ENCODE measurements at regions of chr22 and their contacts with region 1.

Region 1: DNA sequence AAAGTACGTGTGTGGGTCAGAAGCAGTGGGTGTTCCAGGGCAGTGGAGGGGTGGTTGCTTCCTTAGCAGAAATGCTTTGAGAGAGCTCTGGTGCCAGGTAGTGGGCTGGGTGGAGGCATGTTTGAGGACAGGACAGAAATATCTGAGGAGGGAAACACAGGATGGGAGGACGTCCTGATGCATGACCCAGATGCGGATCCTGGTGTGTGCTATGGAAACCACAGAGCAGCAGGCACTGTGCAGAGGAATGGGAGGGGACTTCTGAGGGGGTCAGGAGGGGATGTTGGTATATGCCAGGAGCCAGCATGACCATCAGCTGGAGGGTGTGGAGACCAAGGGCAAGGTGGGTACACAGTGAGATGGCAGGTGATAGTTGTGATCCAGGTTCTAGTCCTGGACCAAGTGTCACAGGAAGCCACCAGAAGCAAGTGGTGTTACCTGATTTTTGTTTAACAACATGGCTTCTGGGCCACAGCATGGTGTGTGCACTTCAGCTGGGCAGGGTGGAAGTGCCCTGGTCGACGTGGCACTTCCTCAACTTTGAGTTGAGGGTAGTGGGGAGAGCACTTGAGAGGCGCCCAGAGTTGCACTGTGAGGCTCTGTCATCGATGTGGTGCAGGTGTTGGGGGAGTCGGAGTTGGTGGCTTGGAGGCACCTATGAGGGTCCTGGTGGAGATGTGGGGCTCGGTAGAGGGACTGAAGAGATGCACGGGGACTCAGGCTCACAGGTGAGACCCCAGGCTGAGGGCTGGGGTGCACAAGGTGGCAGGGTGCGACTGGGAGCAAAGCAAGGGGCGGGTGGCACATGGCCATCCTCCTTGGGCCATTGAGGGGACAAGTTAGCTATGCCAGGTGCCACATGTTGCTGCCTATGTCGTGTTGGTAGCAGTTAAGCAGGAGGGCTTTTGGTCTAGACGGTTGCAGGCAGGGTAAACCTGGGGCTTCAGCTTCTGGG is 7.6 kb downstream of the DGCR8 start:
- DNase-seq: peak in 1 of 2 donors; percentile 51
- H3K4me3 ChIP-seq: no peak overlapping the region
- H3K27ac ChIP-seq: no peak overlapping the region
- H3K4me1 ChIP-seq: peaks cover 6 to 27% (median 19%) of the 10 kb centered on the region in 4 donors
- H3K27me3 ChIP-seq: no peaks in the 10 kb centered on the region
- CTCF ChIP-seq: no peak

Region 2: GRCh38 chr22:19783631-19784383 is 303.8 kb before region 1 on chr22:
- intact Hi-C with region 1: no loop called
- DNase-seq: no peak
- H3K4me3 ChIP-seq: no peak overlapping the region
- H3K27ac ChIP-seq: no peak overlapping the region
- H3K4me1 ChIP-seq: no peaks in the 10 kb centered on the region
- H3K27me3 ChIP-seq: peaks cover 0 to 18% of the 10 kb centered on the region in 2 donors
- CTCF ChIP-seq: no peak

Region 3: DNA sequence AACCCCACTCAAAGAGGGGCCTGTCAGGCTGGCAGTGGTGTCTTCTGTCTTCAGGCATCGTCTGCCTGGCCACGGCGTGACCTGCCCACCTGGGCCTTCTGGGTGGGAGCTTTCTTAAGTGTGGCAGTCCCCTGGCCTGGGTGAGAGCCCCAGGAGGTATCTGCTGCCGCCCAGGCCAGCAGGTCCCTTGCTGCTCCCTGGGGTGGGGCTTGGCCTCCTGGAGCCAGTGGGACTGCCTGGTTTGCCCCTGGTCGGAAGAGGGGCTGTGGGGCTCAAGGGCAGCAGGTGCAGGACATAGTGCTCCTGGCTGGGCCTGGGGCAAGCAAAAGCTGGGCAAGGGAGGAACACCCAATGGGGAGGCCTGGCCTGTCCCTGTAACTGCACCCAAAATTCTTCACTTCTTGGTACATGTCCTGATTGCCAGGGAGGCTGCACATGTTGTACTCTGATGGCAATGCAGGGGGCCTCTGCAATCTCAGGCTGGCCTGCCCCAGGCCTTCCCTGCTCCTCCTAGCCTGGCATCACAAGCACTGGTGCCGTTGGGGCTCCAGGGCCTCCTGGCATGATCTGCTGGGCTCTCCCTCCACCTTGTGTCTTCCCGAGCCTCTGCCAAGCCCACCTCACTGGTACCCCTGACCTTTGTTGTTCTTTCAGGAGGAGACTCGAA is 21.9 kb after region 1 on chr22:
- intact Hi-C with region 1: loop called (anchors 2 kb)
- DNase-seq: no peak
- H3K4me3 ChIP-seq: no peak overlapping the region
- H3K27ac ChIP-seq: no peak overlapping the region
- H3K4me1 ChIP-seq: no peaks in the 10 kb centered on the region
- H3K27me3 ChIP-seq: no peaks in the 10 kb centered on the region
- CTCF ChIP-seq: no peak